HAP-1 (cell line): ENCODE measurements at regions of chr18 and their contacts with region 1.

Region 1: GRCh38 chr18:13216092-13216582 is 2.4 kb upstream of the LDLRAD4 start:
- DNase-seq: peak; percentile 28 to 49
- H3K4me3 ChIP-seq: no peak overlapping the region
- H3K4me1 ChIP-seq: no peaks in the 10 kb centered on the region
- H3K27me3 ChIP-seq: peaks cover 70% of the 10 kb centered on the region

Region 2: DNA sequence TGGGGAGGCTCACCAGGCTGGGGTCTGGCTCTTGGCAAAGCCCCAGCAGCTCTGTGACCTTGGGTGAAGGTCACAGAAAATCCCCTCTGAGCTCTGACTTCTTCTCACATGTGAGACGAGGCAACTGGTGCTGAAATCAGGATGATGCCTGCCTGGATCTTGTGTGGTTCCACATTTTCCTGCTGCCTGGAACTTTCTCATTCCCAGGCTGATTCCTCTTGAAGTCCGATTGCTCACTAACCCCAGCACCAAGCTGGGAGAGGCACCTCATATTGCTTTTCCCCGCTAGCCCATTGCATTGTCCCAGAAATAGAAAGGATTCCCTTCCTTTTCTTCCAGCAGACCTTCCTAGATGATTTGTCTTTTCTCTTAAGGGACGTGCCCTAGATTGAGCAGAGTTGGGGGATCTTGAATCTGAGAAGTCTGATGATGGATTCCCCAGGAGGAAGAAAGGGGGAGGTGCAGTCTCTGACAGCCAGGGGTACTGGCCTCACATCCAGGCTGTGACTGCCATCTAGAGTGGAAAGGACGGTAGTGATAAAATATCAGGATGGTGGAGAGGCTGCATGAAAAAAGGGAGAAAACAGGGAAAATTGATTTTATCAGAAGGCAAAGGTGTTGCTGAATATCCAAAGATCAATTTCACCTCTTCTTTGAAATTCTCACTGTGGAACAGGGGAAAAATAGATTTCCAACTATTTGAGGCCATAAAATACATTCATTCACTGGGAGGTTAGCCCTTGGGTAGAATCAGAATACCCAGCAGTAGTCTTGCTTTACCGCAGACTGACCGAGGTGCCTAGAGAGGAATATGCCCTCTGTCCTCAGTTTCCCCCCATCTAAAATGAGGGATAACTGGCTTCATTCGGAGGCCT is 413.9 kb after region 1 on chr18:
- in situ Hi-C with region 1: loop called (anchors 25 kb)
- DNase-seq: peak; percentile 36 to 64
- H3K4me3 ChIP-seq: no peak overlapping the region
- H3K4me1 ChIP-seq: no peaks in the 10 kb centered on the region
- H3K27me3 ChIP-seq: no peaks in the 10 kb centered on the region

Region 3: GRCh38 chr18:13831864-13832508 is 615.8 kb after region 1 on chr18:
- in situ Hi-C with region 1: no loop called
- DNase-seq: peak in 1 of 2 experiments; percentile 22
- H3K4me3 ChIP-seq: no peak overlapping the region
- H3K4me1 ChIP-seq: no peaks in the 10 kb centered on the region
- H3K27me3 ChIP-seq: no peaks in the 10 kb centered on the region